ENCODE measurements at regions of chr10 and their contacts with region 1.

Region 1: DNA sequence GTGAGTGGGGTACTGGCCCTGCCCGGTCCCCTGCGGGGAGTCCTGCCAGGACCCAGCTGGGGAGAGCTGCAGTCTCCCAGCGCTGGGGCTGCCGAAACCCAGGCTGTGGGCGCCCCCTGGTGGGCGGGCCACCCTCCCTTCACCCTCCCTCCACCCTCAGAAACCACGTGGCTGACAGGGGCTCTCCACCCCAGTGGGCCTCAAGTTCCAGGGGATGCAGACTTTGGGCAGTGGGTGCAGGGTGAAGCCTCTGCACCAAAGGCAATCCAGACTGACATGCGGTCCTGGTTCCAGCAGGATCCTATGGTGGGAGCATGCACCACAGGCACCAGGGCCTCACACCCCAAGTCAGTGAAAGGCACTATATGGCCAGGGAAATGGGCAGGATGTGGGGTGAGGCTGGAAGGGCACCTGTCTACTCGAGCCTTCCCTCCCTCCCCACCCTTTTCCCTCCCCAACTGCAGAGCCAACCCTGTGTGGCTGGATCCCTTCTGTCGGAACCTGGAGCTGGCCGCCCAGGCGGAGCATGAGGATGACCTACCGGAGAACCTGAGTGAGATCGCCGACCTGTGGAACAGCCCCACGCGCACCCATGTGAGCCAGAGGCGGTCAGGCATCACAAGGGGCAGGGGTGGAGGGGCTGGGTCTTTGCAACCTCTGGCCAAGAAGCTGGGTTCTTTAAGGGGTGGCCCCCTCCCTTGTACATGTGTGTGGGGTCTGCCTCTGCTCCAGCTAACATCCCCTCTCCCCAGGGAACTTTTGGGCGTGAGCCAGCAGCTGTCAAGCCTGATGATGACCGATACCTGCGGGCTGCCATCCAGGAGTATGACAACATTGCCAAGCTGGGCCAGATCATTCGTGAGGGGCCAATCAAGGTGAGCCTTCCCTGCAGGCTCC is 38.8 kb downstream of the PSAP start:
- DNase-seq: peak; percentile 87
- CTCF ChIP-seq: peak; percentile 92

Region 2: DNA sequence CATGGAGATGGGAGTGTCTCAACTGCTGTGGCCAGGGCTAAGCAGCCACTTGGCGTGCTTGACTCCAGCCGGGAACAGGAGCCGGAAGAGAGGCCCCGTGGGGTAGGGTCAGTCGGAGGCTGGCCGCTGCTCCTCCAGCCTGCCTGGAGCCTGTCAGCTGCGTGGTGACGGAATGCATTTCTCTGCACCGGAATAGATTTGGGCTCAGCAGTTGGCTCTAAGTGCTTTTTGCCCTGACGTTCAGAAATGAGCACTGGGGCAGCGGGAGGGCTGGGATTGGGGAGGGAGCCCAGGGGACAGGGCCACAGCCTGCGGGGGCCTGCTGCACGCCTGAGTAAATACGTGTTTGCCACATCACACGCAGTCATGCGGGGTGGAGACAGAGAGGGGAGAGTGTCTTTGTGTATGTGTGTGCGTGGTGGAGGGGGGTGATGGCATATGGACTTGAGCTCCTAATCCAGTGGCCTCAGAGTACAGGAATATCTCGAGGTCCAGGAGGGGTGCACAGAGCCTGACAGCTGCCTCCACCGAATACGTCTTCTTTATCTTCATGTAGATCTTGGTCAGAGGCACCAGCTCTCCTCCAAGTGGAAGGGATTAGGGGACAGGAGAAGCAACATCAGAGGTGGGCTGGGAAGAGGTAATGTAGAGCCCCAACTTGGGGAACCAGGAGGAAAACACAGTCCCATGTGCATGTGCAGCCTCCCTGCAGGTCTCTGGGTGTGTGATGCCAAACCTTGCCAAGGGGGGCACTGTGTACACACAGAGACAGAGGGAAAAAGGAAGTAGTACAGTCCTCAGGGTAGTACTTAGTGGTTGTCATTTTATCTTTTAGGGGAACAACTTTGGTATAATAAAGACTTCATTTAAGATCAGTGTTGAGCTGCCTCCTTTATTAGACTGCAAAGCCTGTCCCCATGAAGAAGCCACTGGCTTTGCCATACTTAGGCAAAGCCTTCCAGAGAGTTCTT is 264.1 kb before region 1 on chr10:
- CTCF ChIA-PET with region 1: no interaction called
- POLR2A ChIA-PET with region 1: no interaction called
- DNase-seq: peak; percentile 57
- CTCF ChIP-seq: peak; percentile 42

Region 3: DNA sequence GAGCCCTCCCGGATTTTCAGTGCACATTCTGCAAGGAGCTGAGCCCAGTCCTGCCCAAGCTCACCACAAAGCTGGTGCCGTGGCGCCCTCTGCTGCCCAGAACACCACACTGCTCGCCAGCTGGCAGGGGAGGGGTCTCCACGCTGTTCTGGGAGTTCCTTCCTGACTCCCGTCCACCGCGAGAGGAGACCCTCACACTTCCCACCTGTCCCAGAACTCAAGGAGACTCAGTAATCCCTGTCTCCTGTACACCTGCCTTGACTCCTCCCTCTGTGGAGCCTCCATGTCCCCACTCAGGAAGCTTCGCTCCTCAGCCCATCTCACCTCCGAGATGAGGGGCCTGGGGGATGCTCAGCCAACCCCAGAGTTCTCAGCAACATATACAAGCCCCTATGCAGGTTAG is 104.0 kb before region 1 on chr10:
- CTCF ChIA-PET with region 1: interaction called, 18 read pairs
- POLR2A ChIA-PET with region 1: no interaction called
- DNase-seq: peak; percentile 78
- CTCF ChIP-seq: peak; percentile 87

Region 4: DNA sequence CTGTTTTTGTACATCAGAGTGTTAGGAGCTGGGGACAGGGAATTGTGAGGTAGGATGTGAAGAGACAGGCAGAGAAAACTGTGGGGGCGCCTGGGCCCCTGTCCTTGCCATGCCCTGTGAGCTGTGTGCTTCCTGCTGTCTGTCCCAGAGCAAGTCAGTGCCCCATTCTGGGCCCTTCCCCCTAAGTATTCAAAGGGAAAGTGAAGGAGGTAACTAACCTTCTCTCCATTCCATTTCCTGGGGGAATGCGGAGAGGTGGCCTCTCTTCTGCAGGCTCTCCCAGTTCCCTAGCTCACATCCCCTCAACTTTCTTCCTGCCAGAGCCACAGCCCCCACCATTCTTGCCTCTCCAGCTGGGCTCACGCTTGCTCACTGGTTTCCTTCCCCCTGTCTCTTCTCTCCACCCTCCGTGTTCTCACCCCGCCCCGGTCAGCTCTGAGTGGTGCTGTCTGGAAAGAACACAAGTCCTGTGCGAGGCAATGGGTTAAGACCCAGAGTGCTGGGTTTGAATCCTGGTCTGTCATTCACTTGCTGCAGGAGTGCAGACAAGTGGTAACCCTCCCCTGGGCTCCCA is 29.3 kb before region 1 on chr10:
- CTCF ChIA-PET with region 1: interaction called, 20 read pairs
- POLR2A ChIA-PET with region 1: interaction called, 5 read pairs
- DNase-seq: no peak
- CTCF ChIP-seq: no peak

Region 5: DNA sequence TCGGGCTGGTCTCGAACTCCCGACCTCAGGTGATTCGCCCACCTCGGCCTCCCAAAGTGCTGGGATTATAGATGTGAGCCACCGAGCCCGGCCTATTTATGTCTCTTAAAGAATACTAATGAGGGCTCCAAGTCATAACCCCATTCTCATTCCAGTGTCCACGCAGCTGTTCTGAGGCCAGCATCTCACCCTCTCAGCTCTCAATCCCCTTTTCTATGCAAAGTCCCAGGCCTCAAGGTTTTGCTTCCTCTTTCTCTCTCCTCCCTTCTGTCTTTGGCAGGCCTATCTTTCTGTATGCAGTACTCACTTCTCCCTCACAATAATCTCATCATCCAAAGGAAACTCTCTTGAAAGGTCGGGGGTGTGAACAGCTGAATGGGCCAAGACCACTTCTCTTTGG is 10.9 kb before region 1 on chr10:
- CTCF ChIA-PET with region 1: interaction called, 17 read pairs
- POLR2A ChIA-PET with region 1: no interaction called
- DNase-seq: peak; percentile 79
- CTCF ChIP-seq: no peak

Region 6: DNA sequence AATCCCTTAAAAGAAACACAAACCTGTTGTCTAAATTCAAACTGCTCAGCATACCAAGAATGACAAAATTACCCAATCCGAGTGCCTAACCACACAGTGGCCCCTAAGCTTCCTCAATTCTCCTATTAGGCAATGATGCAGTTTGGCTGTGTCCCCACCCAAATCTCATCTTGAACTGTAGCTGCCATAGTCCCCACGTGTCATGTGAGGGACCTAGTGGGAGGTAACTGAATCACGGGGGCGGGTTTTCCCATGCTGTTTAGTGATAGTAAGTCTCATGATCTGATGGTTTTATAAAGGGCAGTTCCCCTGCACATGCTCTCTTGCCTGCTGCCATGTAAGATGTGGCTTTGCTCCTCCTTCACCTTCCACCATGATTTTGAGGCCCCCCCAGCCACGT is 16.9 kb after region 1 on chr10:
- CTCF ChIA-PET with region 1: interaction called, 12 read pairs
- POLR2A ChIA-PET with region 1: interaction called, 11 read pairs
- DNase-seq: no peak
- CTCF ChIP-seq: no peak